Ascending aorta (tissue), 2 donors: ENCODE measurements at regions of chr7 and their contacts with region 1.

Region 1: DNA sequence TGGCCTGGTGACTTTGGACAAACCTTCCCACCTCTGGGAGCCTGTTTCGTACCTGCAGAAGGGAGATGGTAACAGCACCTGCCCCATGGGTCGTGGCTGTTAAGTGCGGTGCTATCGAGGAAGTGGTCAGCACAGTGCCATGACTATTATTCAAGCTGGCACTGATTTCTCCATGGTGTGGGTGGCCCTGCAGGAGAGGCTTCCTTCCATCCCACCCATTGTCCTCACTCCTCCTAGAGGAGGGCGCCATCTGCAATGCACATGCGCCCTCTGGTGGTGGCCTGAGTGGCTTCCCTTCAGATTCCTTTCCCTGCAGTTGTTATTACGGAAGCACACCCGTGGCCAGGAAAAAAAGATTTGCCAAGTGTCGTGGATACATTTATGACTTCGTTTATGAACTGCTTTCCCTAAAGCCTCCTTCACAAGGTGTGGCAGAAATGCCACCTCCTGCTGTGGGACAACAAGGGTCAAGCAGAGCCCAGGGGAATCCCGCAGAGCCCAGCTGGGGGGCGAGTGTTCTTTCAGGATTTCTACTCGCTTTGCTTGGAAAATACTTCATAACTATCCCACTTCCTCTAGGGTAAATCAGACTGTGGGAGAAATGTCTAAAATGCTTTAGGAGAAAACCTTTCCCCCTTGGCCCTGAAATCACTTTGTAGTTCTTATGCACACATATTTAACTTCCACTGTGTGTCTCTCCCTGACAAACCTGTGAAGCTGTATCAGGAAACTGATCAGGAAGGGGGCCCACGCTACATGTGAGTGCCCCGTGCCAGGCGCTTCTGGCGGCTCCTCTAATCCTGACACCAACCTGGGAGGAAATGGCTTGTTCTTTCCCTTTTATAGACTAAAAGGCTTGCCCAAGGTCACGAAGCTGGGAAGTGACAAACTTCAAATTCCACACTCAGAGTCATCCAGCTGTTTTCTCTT is 98.0 kb upstream of the ANLN start:
- DNase-seq: peak; percentile 43 to 94
- H3K4me3 ChIP-seq: peak overlapping the region; percentile 38 to 55
- H3K27ac ChIP-seq: peak overlapping the region; percentile 89 to 90
- H3K4me1 ChIP-seq: peaks cover 0 to 12% of the 10 kb centered on the region in 2 donors
- H3K27me3 ChIP-seq: no peaks in the 10 kb centered on the region
- CTCF ChIP-seq: peak; percentile 94 to 97 (median 96)

Region 2: DNA sequence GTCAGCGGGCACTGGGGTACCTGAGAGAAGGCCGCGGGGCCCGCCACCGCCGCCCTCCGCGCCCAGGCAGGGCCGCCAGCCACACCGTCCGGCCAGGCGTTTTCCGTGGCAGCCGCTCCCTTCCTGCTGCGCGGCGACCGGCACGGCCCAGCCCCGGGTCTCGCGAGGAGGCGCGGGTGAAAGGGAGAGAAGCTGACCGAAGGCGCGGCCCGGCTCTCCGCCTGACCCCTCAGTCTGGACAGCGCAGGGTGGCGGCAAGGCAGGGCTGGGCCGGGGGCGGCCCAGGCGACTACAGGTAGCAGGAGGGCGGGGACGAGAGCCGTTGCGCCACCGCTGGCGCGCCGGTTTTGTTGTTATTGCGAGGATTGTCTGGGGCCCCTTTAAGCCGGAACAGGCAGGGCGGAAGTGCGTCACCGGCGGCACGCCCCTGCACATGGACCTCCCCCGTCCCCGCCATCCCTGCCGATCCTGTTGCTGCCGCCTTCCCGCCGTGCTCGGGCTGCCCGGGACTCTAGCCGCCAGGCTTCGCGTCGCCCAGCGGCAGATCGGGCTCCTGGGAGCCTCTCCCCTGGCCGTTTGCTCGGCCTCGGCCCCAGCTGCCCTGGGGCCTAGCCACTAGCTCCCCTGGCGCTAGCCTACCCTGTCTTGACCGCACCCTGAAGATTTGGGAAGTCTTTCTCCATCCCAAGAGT is 596.7 kb before region 1 on chr7 and contains the start of gene HERPUD2:
- intact Hi-C with region 1: loop called (anchors 10 kb)
- DNase-seq: peak; percentile 76 to 95
- H3K4me3 ChIP-seq: peak within 1 kb of the TSS; percentile 81 to 86
- H3K27ac ChIP-seq: peak within 1 kb of the TSS; percentile 93 to 97
- H3K4me1 ChIP-seq: peaks cover 3 to 21% of the 10 kb centered on the region in 2 donors
- H3K27me3 ChIP-seq: no peaks in the 10 kb centered on the region
- CTCF ChIP-seq: no peak
- total RNA-seq, gene HERPUD2: 69.8 TPM

Region 3: GRCh38 chr7:36048141-36048901 is 243.3 kb before region 1 on chr7:
- intact Hi-C with region 1: loop called (anchors 5 kb)
- DNase-seq: peak in 1 of 2 donors; percentile 63
- H3K4me3 ChIP-seq: no peak overlapping the region
- H3K27ac ChIP-seq: peak overlapping the region; percentile 57 to 63
- H3K4me1 ChIP-seq: peaks cover 9 to 38% of the 10 kb centered on the region in 2 donors
- H3K27me3 ChIP-seq: no peaks in the 10 kb centered on the region
- CTCF ChIP-seq: no peak

Region 4: GRCh38 chr7:36152756-36153570 is 138.7 kb before region 1 on chr7 and contains the start of gene EEPD1:
- intact Hi-C with region 1: loop called (anchors 2 kb)
- DNase-seq: peak; percentile 99 to 100
- H3K4me3 ChIP-seq: peak within 1 kb of the TSS; percentile 94 to 95
- H3K27ac ChIP-seq: peak within 1 kb of the TSS; percentile 81 to 86
- H3K4me1 ChIP-seq: peaks cover 8 to 38% of the 10 kb centered on the region in 2 donors
- H3K27me3 ChIP-seq: no peaks in the 10 kb centered on the region
- CTCF ChIP-seq: no peak
- total RNA-seq, gene EEPD1: 14.0 TPM

Region 5: DNA sequence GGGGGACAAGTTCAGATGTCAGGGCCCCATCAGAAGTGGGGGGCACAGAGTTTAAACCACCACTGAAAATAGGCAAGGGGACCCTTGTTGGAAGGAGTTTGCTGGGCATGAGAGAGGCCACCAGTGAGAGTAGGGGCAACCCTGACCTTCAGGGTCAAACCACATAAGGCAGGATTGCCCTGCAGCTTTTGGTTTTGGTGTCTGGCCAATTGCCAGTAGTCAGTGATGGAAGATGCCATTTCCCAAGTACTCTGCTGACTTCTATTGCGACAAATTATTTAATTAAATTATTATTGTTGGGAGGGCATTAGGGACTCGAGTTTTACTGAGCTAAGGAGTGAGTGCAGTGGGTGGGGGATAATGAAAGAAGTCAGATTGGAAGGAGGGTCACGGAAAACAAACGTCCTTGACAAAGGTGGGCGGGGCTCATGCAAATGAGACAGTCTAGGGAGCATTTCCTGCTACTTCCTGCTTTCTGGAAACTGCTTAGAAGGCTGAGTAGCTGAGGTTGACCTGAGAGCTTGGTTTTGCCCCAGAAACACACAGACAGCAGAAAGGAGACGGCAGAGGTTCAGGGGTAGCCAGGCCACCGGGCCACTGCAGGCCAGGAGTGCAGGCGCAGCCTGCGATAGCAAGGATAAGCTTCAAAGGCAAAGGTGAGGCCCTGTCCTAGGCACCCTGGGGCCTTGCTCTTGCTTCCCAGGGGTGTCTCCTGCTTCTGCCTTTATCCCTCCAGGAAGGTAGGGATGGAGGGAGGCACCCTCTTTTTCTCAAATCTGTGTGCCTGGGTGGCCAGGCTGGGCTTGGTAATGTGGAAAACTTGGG is 23.9 kb after region 1 on chr7:
- intact Hi-C with region 1: loop called (anchors 1 kb)
- DNase-seq: no peak
- H3K4me3 ChIP-seq: no peak overlapping the region
- H3K27ac ChIP-seq: no peak overlapping the region
- H3K4me1 ChIP-seq: no peaks in the 10 kb centered on the region
- H3K27me3 ChIP-seq: no peaks in the 10 kb centered on the region
- CTCF ChIP-seq: no peak